T-cell (primary cell): ENCODE measurements at regions of chr6 and their contacts with region 1.

Region 1: DNA sequence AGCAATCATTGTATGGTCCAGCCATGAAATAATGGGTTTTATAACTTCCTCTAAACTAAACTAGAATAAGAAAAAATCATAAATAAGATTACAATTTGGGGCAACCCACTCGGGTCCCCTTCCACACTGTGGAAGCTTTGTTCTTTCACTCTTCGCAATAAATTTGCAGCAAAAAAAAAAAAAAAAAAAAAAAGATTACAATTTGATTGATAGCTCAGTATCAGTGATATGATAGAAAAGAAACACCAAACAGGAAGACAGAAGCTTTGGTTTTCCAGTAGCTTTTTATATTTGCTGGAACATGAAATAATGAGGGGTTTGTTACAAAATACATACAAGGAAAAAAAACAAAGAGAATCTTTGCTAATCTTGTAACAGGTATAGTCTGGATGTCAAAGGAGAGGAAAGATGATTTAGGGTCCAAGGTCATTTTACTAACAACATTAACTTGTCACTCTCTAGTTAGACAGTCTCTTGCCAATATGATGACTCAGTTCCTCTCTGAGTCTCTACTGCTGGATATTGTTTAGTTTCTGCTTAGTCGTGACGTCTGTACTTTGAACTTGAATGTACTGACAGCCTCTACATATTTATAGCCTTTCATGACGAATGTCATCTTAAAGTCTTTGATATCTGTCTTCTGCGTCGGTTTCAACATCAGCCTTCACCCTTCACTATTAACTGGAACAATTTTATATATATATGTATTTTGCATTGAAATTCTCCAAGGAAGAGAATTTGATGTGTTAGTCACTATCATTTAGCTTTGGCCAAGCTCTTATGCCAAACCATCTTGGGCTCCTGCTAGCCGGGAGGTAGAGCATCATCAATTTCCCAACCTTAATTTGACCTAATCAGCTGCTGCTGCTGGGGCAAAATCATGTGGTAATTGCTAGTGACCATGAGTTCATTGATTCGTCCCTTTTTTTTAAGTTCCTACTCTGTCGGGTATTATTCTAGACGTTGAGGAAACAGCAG is 213.1 kb upstream of the STXBP5 start:
- DNase-seq: no peak
- ATAC-seq: no peak
- H3K4me3 ChIP-seq: no peak overlapping the region
- H3K4me3 Mint-ChIP-seq: no peak overlapping the region
- H3K27ac ChIP-seq: no peak overlapping the region
- H3K27ac Mint-ChIP-seq: no peak overlapping the region
- H3K4me1 ChIP-seq: no peaks in the 10 kb centered on the region
- H3K4me1 Mint-ChIP-seq: no peaks in the 10 kb centered on the region
- H3K27me3 ChIP-seq: no peaks in the 10 kb centered on the region
- H3K27me3 Mint-ChIP-seq: no peaks in the 10 kb centered on the region

Region 2: DNA sequence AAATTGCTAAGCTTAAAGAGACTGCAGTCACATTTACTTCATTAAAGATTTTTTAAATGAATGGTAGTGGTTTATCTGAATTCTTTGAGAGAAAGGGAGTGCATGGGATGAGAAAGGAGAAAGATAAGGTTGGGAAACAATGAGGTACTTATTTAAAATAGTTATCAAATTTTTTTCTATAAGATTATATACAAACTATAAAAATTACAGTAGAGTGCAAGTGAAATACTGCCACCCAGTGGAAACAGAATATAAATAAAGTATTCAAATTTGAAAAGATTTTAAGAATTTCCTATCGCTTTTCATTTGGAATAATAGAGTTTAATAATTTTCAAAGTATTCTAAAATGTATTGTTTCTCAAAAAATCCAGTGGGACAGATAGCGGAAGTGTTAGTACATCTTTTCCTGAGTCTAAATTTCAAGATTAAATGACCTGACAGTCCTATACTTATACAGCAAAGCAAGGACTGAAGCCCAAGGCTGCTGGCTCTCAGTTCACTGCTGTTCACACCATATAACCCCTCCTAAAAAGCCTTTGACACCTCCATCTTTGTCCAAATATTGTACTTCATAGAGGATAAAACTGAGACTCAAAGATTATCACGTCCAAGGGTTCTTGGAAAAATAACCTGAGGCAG is 1286.8 kb before region 1 on chr6:
- CTCF ChIA-PET with region 1: interaction called in 1 of 2 experiments, 12 read pairs
- POLR2A ChIA-PET with region 1: no interaction called
- DNase-seq: peak in 1 of 35 experiments; percentile 6
- ATAC-seq: no peak
- H3K4me3 ChIP-seq: no peak overlapping the region
- H3K4me3 Mint-ChIP-seq: no peak overlapping the region
- H3K27ac ChIP-seq: no peak overlapping the region
- H3K27ac Mint-ChIP-seq: no peak overlapping the region
- H3K4me1 ChIP-seq: no peaks in the 10 kb centered on the region
- H3K4me1 Mint-ChIP-seq: peaks cover 6 to 8% (median 7%) of the 10 kb centered on the region in 3 donors
- H3K27me3 ChIP-seq: no peaks in the 10 kb centered on the region
- H3K27me3 Mint-ChIP-seq: no peaks in the 10 kb centered on the region

Region 3: DNA sequence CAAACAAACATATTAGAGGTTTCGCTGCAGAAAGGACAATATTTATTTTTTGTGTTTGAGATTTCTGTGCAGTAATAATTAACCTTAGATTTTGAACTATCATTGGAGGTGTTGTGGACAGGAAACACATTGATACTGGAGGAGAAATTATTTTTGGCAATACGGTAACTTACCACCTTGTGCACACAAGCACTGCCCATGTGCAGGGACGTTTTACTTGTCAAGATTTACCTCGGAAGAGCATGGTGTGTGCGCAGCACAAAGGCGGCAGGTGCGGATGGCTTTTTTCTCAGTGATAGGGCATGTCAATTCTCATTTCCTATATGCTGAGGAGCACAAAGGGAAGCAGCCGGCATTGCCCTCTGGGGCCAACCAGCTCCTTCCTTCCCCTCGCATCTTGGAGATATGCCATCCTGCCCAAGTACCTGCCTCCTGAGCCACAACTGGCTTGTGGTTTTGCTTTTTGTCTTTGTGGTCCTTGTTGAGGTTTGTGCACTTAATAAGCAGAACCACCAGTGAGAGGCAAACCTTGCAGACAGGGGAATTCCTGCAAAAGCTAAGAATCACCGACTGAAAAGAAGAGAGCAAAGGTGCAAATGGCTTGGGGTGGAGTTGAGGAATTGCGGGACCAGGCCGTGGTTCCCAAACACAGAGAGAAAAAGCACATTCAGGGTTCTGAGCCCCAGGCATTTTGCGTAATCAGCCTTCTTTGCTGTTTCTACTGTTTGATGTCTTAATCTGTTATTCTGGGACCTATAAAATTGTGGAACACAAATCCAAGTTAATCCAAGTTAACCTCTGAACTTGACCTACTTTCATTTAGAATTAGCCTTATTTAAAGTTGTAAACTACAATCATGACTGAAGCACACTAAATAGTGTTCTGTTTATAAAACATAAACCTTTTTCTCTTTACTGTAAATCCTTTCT is 539.3 kb after region 1 on chr6:
- CTCF ChIA-PET with region 1: no interaction called
- POLR2A ChIA-PET with region 1: no interaction called
- DNase-seq: peak in 1 of 35 experiments; percentile 21
- ATAC-seq: peak in 1 of 4 experiments; percentile 39
- H3K4me3 ChIP-seq: peak overlapping the region in 1 of 2 donors; percentile 26
- H3K4me3 Mint-ChIP-seq: no peak overlapping the region
- H3K27ac ChIP-seq: no peak overlapping the region
- H3K27ac Mint-ChIP-seq: no peak overlapping the region
- H3K4me1 ChIP-seq: peaks cover 2 to 5% of the 10 kb centered on the region in 2 experiments
- H3K4me1 Mint-ChIP-seq: peaks cover 8 to 10% (median 10%) of the 10 kb centered on the region in 3 donors
- H3K27me3 ChIP-seq: peaks cover 5% of the 10 kb centered on the region in 2 experiments
- H3K27me3 Mint-ChIP-seq: peaks cover 16 to 26% of the 10 kb centered on the region in 2 donors